HEK293 (cell line): ENCODE measurements at regions of chr1 and their contacts with region 1.

Region 1: GRCh38 chr1:65958561-65959350 is 166.1 kb downstream of the PDE4B start:
- H3K4me3 ChIP-seq: no peak overlapping the region
- H3K27ac ChIP-seq: no peak overlapping the region
- H3K4me1 ChIP-seq: peaks cover 3% of the 10 kb centered on the region; the same call in 1 of the 2 replicates
- CTCF ChIP-seq: peak; percentile 15; the same call in 1 of the 2 replicates

Region 2: GRCh38 chr1:65846866-65847265 is 111.9 kb before region 1 on chr1:
- CTCF ChIA-PET with region 1: no interaction called
- POLR2A ChIA-PET with region 1: no interaction called
- H3K4me3 ChIP-seq: no peak overlapping the region
- H3K27ac ChIP-seq: no peak overlapping the region
- H3K4me1 ChIP-seq: no peaks in the 10 kb centered on the region
- CTCF ChIP-seq: no peak

Region 3: DNA sequence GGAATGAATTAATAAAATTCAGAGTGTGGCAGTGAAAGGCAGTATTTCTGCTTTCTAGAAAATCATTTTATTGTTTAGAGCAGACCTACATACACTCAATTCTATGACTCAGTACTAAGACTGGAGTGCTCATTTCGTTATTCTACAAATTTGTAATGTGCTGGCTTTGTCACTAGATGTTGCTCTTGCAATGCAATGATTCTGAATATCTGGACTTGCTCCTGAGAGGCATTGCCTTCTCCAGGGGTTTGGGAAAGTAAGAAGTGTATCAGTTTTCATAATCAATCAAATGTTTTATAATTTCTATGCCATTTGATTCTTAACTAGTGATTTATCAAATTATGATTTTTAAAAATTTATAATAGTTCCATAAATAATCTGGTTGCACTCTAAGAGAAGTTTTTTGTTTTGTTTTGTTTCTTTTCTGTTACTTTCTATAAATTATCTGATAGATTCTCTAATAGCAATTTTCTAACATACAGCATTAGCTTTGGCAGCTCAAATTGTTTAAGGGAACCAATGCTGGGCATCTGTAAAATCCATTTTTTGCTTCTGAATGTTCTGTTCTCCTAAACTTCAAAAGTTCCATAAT is 294.7 kb after region 1 on chr1:
- CTCF ChIA-PET with region 1: interaction called, 17 read pairs
- POLR2A ChIA-PET with region 1: no interaction called
- H3K4me3 ChIP-seq: no peak overlapping the region
- H3K27ac ChIP-seq: no peak overlapping the region
- H3K4me1 ChIP-seq: no peaks in the 10 kb centered on the region
- CTCF ChIP-seq: peak; percentile 59; the same call in 1 of the 2 replicates